Heart left ventricle (tissue), 16 donors: ENCODE measurements at regions of chr5 and their contacts with region 1.

Region 1: DNA sequence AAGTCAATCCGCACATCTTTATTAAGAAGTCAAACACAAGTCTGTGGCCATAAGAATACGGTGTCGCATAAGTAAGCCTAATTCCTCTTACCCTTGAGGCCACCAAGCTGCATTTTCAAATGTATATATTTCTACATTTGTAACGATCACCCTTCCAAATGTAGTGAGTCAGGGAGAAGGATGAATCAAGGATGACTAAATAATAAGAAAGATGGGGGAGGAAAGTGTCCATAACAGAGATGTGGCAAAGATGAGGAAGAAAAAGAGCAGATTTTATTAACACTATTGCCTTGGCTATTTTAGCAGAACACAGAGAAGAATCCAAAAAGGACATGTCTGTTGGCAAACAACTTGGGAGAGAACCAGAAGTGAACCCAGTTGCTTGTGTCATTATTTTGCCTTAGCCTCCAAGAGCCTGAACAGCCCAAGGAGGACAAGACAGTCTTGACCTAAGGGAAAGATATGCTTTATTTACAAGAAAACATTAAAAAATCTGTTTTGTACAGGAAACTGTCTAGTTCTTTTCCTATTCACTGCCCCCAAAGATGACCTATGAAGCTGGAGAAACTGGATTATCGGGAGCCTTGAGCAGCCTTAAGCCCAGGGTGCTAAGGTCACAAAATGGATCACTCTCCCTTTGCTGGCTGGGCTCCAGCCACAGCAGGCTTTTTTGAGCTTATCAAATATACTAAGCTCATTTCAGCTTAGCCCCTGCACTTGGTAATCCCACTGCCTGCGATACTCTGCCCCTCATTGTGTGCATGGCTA is 101.5 kb downstream of the PLCXD3 start:
- DNase-seq: no peak
- ATAC-seq: peak in 1 of 4 donors; percentile 23
- H3K4me3 ChIP-seq: no peak overlapping the region
- H3K27ac ChIP-seq: peak overlapping the region in 10 of 12 donors; percentile 8 to 68 (median 52)
- H3K4me1 ChIP-seq: peaks cover 0 to 41% (median 14%) of the 10 kb centered on the region in 12 donors
- H3K27me3 ChIP-seq: no peaks in the 10 kb centered on the region
- CTCF ChIP-seq: no peak
- POLR2A ChIP-seq: no peak

Region 2: GRCh38 chr5:41457094-41457493 is 48.2 kb after region 1 on chr5:
- intact Hi-C with region 1: loop called in 1 of 10 experiments (anchors 10 kb)
- DNase-seq: peak in 4 of 5 donors; percentile 30 to 76 (median 55)
- ATAC-seq: peak; percentile 87 to 93 (median 93)
- H3K4me3 ChIP-seq: no peak overlapping the region
- H3K27ac ChIP-seq: peak overlapping the region; percentile 23 to 84 (median 68)
- H3K4me1 ChIP-seq: peaks cover 0 to 46% (median 13%) of the 10 kb centered on the region in 12 donors
- H3K27me3 ChIP-seq: no peaks in the 10 kb centered on the region
- CTCF ChIP-seq: no peak
- POLR2A ChIP-seq: no peak